Heart right ventricle (tissue), 16 donors: ENCODE measurements at regions of chr1 and their contacts with region 1.

Region 1: GRCh38 chr1:178093205-178093957 is 523 bp upstream of the RASAL2 start:
- DNase-seq: peak; percentile 91 to 95
- ATAC-seq: peak; percentile 83 to 94 (median 90)
- H3K4me3 ChIP-seq: peak overlapping the region; percentile 45 to 100 (median 96)
- H3K27ac ChIP-seq: peak overlapping the region; percentile 75 to 97 (median 94)
- H3K4me1 ChIP-seq: peaks cover 0 to 53% (median 45%) of the 10 kb centered on the region in 9 donors
- H3K27me3 ChIP-seq: peaks cover 0 to 14% (median 0%) of the 10 kb centered on the region in 7 donors
- CTCF ChIP-seq: peak in 1 of 9 donors; percentile 14

Region 2: GRCh38 chr1:178055779-178056471 is 37.5 kb before region 1 on chr1:
- intact Hi-C with region 1: loop called in 8 of 10 experiments (anchors 1 to 5 kb)
- DNase-seq: peak in 1 of 2 donors; percentile 38
- ATAC-seq: peak in 6 of 8 donors; percentile 43 to 64 (median 48)
- H3K4me3 ChIP-seq: no peak overlapping the region
- H3K27ac ChIP-seq: peak overlapping the region; percentile 72 to 95 (median 82)
- H3K4me1 ChIP-seq: peaks cover 31 to 97% (median 90%) of the 10 kb centered on the region in 9 donors
- H3K27me3 ChIP-seq: no peaks in the 10 kb centered on the region
- CTCF ChIP-seq: peak in 7 of 9 donors; percentile 4 to 53 (median 26)

Region 3: GRCh38 chr1:178143730-178144690 is 50.6 kb after region 1 on chr1:
- intact Hi-C with region 1: loop called in 1 of 10 experiments (anchors 10 kb)
- DNase-seq: no peak
- ATAC-seq: peak in 1 of 8 donors; percentile 41
- H3K4me3 ChIP-seq: no peak overlapping the region
- H3K27ac ChIP-seq: no peak overlapping the region
- H3K4me1 ChIP-seq: peaks cover 0 to 48% (median 7%) of the 10 kb centered on the region in 9 donors
- H3K27me3 ChIP-seq: no peaks in the 10 kb centered on the region
- CTCF ChIP-seq: no peak

Region 4: GRCh38 chr1:178172954-178173353 is 79.6 kb after region 1 on chr1:
- intact Hi-C with region 1: loop called in 3 of 10 experiments (anchors 5 to 10 kb)
- DNase-seq: no peak
- ATAC-seq: peak in 1 of 8 donors; percentile 52
- H3K4me3 ChIP-seq: no peak overlapping the region
- H3K27ac ChIP-seq: no peak overlapping the region
- H3K4me1 ChIP-seq: peaks cover 0 to 52% (median 29%) of the 10 kb centered on the region in 9 donors
- H3K27me3 ChIP-seq: no peaks in the 10 kb centered on the region
- CTCF ChIP-seq: no peak

Region 5: GRCh38 chr1:178273707-178274410 is 180.5 kb after region 1 on chr1:
- intact Hi-C with region 1: loop called in 2 of 10 experiments (anchors 5 to 10 kb)
- DNase-seq: no peak
- ATAC-seq: no peak
- H3K4me3 ChIP-seq: no peak overlapping the region
- H3K27ac ChIP-seq: no peak overlapping the region
- H3K4me1 ChIP-seq: peaks cover 0 to 47% (median 31%) of the 10 kb centered on the region in 9 donors
- H3K27me3 ChIP-seq: no peaks in the 10 kb centered on the region
- CTCF ChIP-seq: no peak